Motor neuron (in vitro differentiated cells): ENCODE measurements at regions of chr7 and their contacts with region 1.

Region 1: DNA sequence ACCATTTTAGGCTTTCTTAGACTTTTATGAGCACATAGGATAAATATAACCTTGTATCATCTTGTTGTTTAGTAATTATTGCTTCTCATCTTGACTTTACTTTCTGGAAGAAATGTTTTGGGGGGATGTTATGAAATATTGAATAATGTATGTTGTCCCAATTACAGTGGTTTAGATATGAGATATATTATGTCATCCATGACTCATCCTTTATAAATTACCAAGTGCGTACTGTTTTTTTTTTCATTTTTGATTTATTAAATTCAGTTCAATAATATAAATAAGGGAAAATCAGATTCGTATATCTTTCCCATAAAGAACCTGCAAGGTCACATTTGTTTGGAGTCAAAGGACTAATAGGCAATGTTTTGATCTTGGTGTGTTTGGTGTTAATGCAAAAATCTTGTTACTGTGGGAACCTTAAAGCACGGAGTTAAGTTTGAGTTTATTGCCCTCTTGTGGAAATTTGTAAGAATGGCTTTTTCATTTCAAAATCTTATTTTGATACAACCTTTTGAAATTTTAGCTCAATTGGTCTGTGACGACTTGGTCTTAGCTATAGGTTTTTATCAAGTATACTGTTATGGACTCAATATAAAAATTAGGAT is 108.6 kb downstream of the SRI start:
- ATAC-seq: peak in 4 of 8 experiments; percentile 36 to 64 (median 50)
- H3K4me3 ChIP-seq: no peak overlapping the region
- H3K27ac ChIP-seq: no peak overlapping the region
- H3K4me1 ChIP-seq: peaks cover 2 to 12% of the 10 kb centered on the region in 2 donors

Region 2: DNA sequence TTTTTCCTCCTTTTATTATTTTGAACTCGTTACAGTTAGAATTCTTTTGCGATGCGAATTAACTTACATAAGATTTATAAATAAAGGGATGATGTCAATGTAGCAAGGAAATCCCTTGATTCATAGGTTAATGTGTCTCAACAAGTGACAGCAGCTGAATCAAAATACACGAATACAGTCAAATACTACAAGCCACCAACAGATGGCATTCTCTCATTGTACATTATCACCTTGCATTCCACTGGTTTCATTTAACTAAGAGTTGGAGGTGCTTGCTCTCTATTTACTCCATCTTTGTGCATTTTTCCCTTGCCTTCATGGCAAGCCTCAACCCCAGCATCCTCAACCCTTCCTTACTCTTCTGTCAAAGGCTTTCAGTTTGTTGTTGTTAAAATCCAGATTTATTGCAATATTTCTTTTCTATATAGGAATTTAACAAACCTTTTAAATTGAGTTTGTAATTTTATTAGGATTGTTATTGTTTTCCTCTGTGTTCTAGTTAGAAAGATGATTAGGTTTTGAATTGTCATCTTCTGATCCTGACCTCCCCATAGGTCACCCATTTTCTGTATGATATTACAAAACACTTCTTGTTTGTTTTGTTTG is 313.3 kb before region 1 on chr7:
- in situ Hi-C with region 1: loop called in 1 of 9 experiments (anchors 25 kb)
- ATAC-seq: peak in 5 of 8 experiments; percentile 64 to 75 (median 71)
- H3K4me3 ChIP-seq: no peak overlapping the region
- H3K27ac ChIP-seq: no peak overlapping the region
- H3K4me1 ChIP-seq: no peaks in the 10 kb centered on the region

Region 3: GRCh38 chr7:87853237-87853864 is 257.9 kb before region 1 on chr7:
- in situ Hi-C with region 1: no loop called
- ATAC-seq: peak in 1 of 8 experiments; percentile 31
- H3K4me3 ChIP-seq: no peak overlapping the region
- H3K27ac ChIP-seq: no peak overlapping the region
- H3K4me1 ChIP-seq: no peaks in the 10 kb centered on the region

Region 4: GRCh38 chr7:87933945-87934698 is 177.1 kb before region 1 on chr7 and contains the start of gene ADAM22:
- in situ Hi-C with region 1: loop called in 2 of 9 experiments (anchors 25 kb)
- ATAC-seq: peak; percentile 89 to 97 (median 96)
- H3K4me3 ChIP-seq: peak within 1 kb of the TSS; percentile 55 to 83 (median 68)
- H3K27ac ChIP-seq: peak within 1 kb of the TSS; percentile 74
- H3K4me1 ChIP-seq: peaks cover 0 to 6% of the 10 kb centered on the region in 2 donors
- total RNA-seq, gene ADAM22: 0.51 to 26.0 (median 15.7) TPM

Region 5: GRCh38 chr7:88357781-88358525 is 246.7 kb after region 1 on chr7:
- in situ Hi-C with region 1: no loop called
- ATAC-seq: peak in 3 of 8 experiments; percentile 58 to 79 (median 73)
- H3K4me3 ChIP-seq: no peak overlapping the region
- H3K27ac ChIP-seq: no peak overlapping the region
- H3K4me1 ChIP-seq: no peaks in the 10 kb centered on the region